GM12878 (cell line): ENCODE measurements at regions of chr6 and their contacts with region 1.

Region 1: DNA sequence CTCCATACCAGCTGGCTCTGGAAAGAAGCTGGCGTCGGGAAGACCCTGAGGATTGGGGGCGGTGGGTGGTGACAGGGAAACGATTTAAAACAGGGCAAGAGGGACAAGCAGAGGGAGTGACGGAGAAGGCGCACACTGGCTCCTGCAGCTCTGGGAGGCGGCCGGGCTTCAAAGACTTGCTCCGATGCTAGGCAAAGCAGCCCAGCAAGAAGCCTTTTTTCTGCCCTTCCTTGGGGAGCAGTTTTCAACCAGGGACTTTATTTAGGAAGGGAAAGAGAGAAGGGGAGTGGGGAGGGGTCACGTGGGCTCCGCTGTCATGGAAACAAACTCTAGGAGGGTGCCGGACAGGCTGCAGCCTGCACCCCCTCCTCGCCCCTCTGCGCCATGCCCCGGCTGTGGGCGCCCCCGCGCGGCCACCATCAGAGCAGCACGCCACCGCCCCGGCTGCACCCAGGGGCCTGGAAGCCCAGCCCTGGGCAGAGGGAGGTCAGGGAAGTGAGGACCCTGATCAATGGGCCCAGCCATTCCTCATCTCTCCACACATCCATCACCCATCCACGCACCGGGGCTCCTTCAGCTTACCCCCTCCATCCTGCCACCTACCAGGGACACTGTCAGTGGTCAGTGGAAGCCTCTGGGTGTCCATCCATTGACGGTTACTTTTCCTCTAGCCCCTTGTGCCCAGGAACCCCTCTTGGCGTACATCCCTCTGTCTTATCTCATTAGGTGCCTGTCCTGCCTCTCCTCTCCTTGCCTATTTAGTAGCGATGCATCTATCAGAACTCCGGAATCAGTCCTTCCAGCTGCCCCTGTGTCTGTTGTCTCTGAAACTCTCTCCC is 66.6 kb upstream of the CCDC167 start:
- DNase-seq: no peak
- ATAC-seq: peak; percentile 73
- H3K4me3 ChIP-seq: peak overlapping the region; percentile 61
- H3K27ac ChIP-seq: peak overlapping the region; percentile 91
- H3K4me1 ChIP-seq: peaks cover 52% of the 10 kb centered on the region
- H3K27me3 ChIP-seq: no peaks in the 10 kb centered on the region
- CTCF ChIP-seq: peak; percentile 86 to 97 (median 89)
- EP300 ChIP-seq: no peak
- POLR2A ChIP-seq: no peak
- RAD21 ChIP-seq: peak; percentile 93

Region 2: GRCh38 chr6:37222125-37222967 is 344.0 kb before region 1 on chr6:
- CTCF ChIA-PET with region 1: no interaction called
- POLR2A ChIA-PET with region 1: no interaction called
- RAD21 ChIA-PET with region 1: no interaction called
- SMC1A ChIA-PET with region 1: no interaction called
- in situ Hi-C with region 1: no loop called
- intact Hi-C with region 1: no loop called
- DNase-seq: peak; percentile 45
- ATAC-seq: peak; percentile 98
- H3K4me3 ChIP-seq: peak overlapping the region; percentile 71
- H3K27ac ChIP-seq: no peak overlapping the region
- H3K4me1 ChIP-seq: peaks cover 11% of the 10 kb centered on the region
- H3K27me3 ChIP-seq: no peaks in the 10 kb centered on the region
- CTCF ChIP-seq: no peak
- EP300 ChIP-seq: no peak
- POLR2A ChIP-seq: no peak; the same call in 1 of the 2 replicates
- RAD21 ChIP-seq: no peak

Region 3: DNA sequence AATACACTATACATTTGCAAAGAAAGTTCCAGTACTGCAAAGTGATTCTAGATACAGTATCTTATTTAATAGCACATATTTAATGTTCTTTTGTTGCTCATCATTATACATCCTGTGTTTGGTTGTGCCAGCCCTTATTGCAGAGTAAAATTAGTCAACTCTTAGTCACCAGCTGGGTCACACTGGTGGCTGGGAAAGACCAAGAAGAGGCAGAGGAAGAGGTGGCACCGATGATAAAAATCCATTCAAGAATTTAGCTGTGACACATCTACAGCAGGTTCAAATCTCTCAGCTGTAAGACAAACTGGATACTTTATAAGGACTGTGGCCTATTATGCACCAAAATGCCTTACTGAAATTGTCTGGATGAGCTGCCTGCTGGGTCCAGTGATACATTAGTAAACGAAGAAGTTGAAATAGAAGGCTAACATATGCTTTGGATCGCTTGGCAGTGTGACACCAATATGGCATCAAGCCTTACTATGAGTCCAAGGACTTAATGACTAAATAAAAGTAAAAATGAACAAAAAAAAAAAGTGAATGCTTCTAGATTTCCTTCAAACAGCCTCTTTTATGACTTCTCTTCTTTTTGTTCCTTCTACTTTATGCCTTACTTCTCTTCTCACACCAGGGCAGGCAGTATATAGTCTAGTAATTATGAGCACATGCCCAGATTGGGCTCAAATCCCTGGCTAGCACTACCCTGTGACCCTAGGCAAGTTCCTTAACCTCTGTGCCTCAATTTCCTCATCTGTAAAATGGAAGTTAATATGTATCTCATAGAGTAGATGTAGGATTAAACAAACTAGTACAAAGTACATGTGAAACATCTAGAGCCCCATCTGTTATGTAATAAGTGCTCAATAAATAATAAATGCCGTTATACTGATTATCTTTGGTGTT is 241.9 kb before region 1 on chr6:
- CTCF ChIA-PET with region 1: interaction called, 10 read pairs
- POLR2A ChIA-PET with region 1: no interaction called
- RAD21 ChIA-PET with region 1: interaction called, 10 read pairs
- SMC1A ChIA-PET with region 1: interaction called, 3 read pairs
- in situ Hi-C with region 1: no loop called
- intact Hi-C with region 1: loop called (anchors 10 kb)
- DNase-seq: no peak
- ATAC-seq: no peak
- H3K4me3 ChIP-seq: no peak overlapping the region
- H3K27ac ChIP-seq: no peak overlapping the region
- H3K4me1 ChIP-seq: no peaks in the 10 kb centered on the region
- H3K27me3 ChIP-seq: no peaks in the 10 kb centered on the region
- CTCF ChIP-seq: no peak
- EP300 ChIP-seq: no peak
- POLR2A ChIP-seq: no peak
- RAD21 ChIP-seq: no peak

Region 4: DNA sequence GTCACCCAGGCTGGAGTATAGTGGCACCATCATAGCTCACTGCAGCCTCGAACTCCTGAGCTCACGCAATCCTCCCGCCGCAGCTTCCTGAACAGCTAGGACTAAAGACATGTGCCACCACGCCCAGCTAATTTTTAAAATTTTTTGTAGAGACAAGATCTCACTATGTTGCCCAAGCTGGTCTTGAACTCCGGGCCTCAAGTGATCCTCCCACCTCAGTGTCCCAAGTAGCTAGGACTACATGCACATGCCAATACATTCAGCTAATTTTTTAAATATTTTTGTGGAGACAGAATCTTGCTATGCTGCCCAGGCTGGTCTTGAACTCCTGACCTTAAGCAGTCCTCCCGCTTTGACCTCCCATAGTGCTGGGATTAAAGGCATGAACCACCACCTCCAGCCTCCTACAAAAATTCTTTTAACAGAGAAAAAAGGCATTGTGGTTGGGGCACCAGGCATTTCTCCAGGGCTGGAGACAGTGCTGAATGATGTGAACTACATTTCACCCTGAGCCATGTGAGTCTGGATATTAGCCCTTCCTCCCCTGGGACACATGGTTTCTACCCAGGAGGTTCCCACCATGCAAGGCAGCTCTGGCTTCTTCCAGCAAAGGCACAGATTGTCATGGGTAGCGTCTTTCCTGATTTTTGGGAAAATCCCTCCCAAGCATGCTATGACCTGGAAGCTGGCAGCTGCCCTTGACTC is 169.7 kb before region 1 on chr6:
- CTCF ChIA-PET with region 1: no interaction called
- POLR2A ChIA-PET with region 1: no interaction called
- RAD21 ChIA-PET with region 1: no interaction called
- SMC1A ChIA-PET with region 1: no interaction called
- in situ Hi-C with region 1: no loop called
- intact Hi-C with region 1: no loop called
- DNase-seq: no peak
- ATAC-seq: no peak
- H3K4me3 ChIP-seq: no peak overlapping the region
- H3K27ac ChIP-seq: no peak overlapping the region
- H3K4me1 ChIP-seq: no peaks in the 10 kb centered on the region
- H3K27me3 ChIP-seq: no peaks in the 10 kb centered on the region
- CTCF ChIP-seq: no peak
- EP300 ChIP-seq: no peak
- POLR2A ChIP-seq: no peak
- RAD21 ChIP-seq: no peak

Region 5: GRCh38 chr6:37432916-37433656 is 133.2 kb before region 1 on chr6 and contains the start of gene CMTR1:
- CTCF ChIA-PET with region 1: interaction called, 14 read pairs
- POLR2A ChIA-PET with region 1: interaction called, 3 read pairs
- RAD21 ChIA-PET with region 1: interaction called, 12 read pairs
- SMC1A ChIA-PET with region 1: interaction called, 5 read pairs
- in situ Hi-C with region 1: no loop called
- intact Hi-C with region 1: no loop called
- DNase-seq: peak; percentile 83
- ATAC-seq: peak; percentile 91
- H3K4me3 ChIP-seq: peak within 1 kb of the TSS; percentile 97
- H3K27ac ChIP-seq: peak within 1 kb of the TSS; percentile 94
- H3K4me1 ChIP-seq: peaks cover 5% of the 10 kb centered on the region
- H3K27me3 ChIP-seq: no peaks in the 10 kb centered on the region
- CTCF ChIP-seq: no peak
- EP300 ChIP-seq: peak in 1 of 2 experiments; percentile 42; a peak in 2 of 4 replicates
- POLR2A ChIP-seq: peak; percentile 90
- RAD21 ChIP-seq: no peak
- polyA plus RNA-seq, gene CMTR1: 2.7 to 3.5 TPM

Region 6: DNA sequence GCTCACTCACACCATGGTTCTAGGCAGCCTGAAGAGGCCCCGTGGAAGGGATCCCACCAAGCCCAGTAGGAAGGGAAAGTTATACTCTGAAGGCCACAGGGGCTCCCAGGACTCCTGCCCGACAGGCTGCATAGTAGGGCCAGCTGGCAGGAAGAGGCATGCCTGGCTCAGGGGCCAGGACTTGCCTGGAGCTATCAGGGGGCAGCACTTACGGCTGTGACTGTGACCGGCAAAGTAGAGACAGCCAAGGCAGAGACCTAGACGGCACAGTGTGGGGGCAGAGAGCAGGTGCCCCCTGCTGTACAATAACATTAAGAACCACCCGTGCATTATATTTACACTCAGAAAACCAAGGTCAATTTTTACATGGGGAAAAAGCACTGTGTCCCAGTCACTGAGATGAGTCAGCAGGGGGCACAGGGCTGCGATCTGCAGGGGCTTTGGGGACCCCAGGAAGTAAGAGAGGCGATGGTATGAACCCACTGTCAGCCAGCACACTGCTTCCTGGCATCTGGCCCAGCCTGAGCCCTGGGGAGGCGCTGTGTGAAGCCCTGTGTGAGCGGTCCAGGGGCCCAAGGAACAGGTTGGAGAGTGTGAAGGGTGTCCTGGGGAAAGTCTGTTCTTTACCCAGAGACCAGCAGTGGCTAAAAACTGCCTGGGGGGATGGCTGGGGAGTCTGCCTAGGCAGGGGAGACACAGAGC is 76.5 kb before region 1 on chr6:
- CTCF ChIA-PET with region 1: interaction called, 97 read pairs
- POLR2A ChIA-PET with region 1: interaction called, 53 read pairs
- RAD21 ChIA-PET with region 1: interaction called, 32 read pairs
- SMC1A ChIA-PET with region 1: interaction called, 92 read pairs
- in situ Hi-C with region 1: no loop called
- intact Hi-C with region 1: no loop called
- DNase-seq: no peak
- ATAC-seq: peak; percentile 54
- H3K4me3 ChIP-seq: no peak overlapping the region
- H3K27ac ChIP-seq: peak overlapping the region; percentile 69
- H3K4me1 ChIP-seq: peaks cover 58% of the 10 kb centered on the region
- H3K27me3 ChIP-seq: no peaks in the 10 kb centered on the region
- CTCF ChIP-seq: peak; percentile 11 to 35 (median 14); a peak in 4 of 6 replicates
- EP300 ChIP-seq: no peak
- POLR2A ChIP-seq: 0 out of 2 replicates have a peak, but pooled peaks have one; percentile 9
- RAD21 ChIP-seq: no peak

Region 7: GRCh38 chr6:37516076-37516919 is 50.0 kb before region 1 on chr6:
- CTCF ChIA-PET with region 1: interaction called, 25 read pairs
- POLR2A ChIA-PET with region 1: interaction called, 16 read pairs
- RAD21 ChIA-PET with region 1: interaction called, 14 read pairs
- SMC1A ChIA-PET with region 1: interaction called, 13 read pairs
- in situ Hi-C with region 1: no loop called
- intact Hi-C with region 1: no loop called
- DNase-seq: peak; percentile 78
- ATAC-seq: peak; percentile 94
- H3K4me3 ChIP-seq: 0 out of 2 replicates have a peak overlapping the region, but pooled peaks have one; percentile 10
- H3K27ac ChIP-seq: peak overlapping the region; percentile 65
- H3K4me1 ChIP-seq: peaks cover 33% of the 10 kb centered on the region
- H3K27me3 ChIP-seq: no peaks in the 10 kb centered on the region
- CTCF ChIP-seq: peak in 2 of 3 experiments; percentile 3 to 11; a peak in 1 of 6 replicates
- EP300 ChIP-seq: peak in 1 of 2 experiments; percentile 26; a peak in 1 of 4 replicates
- POLR2A ChIP-seq: peak; percentile 69
- RAD21 ChIP-seq: no peak

Region 8: GRCh38 chr6:37554480-37554819 is 11.9 kb before region 1 on chr6:
- CTCF ChIA-PET with region 1: interaction called, 235 read pairs
- POLR2A ChIA-PET with region 1: interaction called, 114 read pairs
- RAD21 ChIA-PET with region 1: interaction called, 174 read pairs
- SMC1A ChIA-PET with region 1: interaction called, 232 read pairs
- in situ Hi-C with region 1: no loop called
- intact Hi-C with region 1: loop called (anchors 1 kb)
- DNase-seq: no peak
- ATAC-seq: peak; percentile 8
- H3K4me3 ChIP-seq: peak overlapping the region; percentile 81
- H3K27ac ChIP-seq: peak overlapping the region; percentile 91
- H3K4me1 ChIP-seq: peaks cover 86% of the 10 kb centered on the region
- H3K27me3 ChIP-seq: no peaks in the 10 kb centered on the region
- CTCF ChIP-seq: no peak
- EP300 ChIP-seq: no peak
- POLR2A ChIP-seq: no peak
- RAD21 ChIP-seq: no peak

Region 9: GRCh38 chr6:37587866-37588734 is 21.8 kb after region 1 on chr6:
- CTCF ChIA-PET with region 1: no interaction called
- POLR2A ChIA-PET with region 1: no interaction called
- RAD21 ChIA-PET with region 1: no interaction called
- SMC1A ChIA-PET with region 1: no interaction called
- in situ Hi-C with region 1: no loop called
- intact Hi-C with region 1: no loop called
- DNase-seq: no peak
- ATAC-seq: no peak
- H3K4me3 ChIP-seq: no peak overlapping the region
- H3K27ac ChIP-seq: no peak overlapping the region
- H3K4me1 ChIP-seq: no peaks in the 10 kb centered on the region
- H3K27me3 ChIP-seq: no peaks in the 10 kb centered on the region; a peak in 2 of 4 replicates
- CTCF ChIP-seq: no peak
- EP300 ChIP-seq: no peak
- POLR2A ChIP-seq: no peak
- RAD21 ChIP-seq: no peak

Region 10: DNA sequence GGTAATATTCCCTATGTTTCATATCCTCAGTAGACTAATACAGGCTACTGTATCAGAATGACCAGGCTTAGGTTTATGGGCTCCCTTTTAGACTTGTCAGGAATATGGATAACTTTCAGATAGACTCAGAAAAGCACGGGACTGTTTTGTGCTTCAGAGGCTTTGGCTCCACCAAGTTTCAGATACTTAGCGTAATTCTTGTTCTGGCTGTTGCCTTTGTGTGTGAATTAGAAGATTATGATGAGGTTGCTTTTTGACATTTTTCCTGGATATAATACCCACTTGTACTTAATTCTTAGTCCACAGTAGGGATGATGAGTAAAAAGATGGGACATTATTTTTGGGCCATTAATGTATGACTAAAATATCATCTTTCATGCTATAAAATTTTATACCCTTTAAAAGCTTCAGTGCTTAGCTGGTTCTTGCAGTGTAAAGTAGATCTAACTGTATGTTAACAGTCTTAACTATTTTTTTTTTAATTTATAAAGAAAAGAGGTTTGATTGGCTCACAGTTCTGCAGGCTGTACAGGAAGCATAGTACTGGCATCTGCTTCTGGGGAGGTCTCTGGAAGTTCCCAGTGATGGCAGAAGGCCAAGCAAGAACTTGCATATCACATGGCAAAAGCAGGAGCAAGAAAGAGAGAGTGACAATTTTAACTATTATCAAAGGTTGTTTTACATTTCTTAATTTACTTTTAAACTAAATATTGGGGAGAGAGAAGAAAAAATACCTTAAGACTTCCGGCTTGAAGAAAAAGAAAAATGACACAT is 373.9 kb after region 1 on chr6:
- CTCF ChIA-PET with region 1: no interaction called
- POLR2A ChIA-PET with region 1: no interaction called
- RAD21 ChIA-PET with region 1: no interaction called
- SMC1A ChIA-PET with region 1: no interaction called
- in situ Hi-C with region 1: no loop called
- intact Hi-C with region 1: no loop called
- DNase-seq: no peak
- ATAC-seq: no peak
- H3K4me3 ChIP-seq: no peak overlapping the region
- H3K27ac ChIP-seq: no peak overlapping the region
- H3K4me1 ChIP-seq: peaks cover 24% of the 10 kb centered on the region
- H3K27me3 ChIP-seq: no peaks in the 10 kb centered on the region
- CTCF ChIP-seq: no peak
- EP300 ChIP-seq: no peak
- POLR2A ChIP-seq: no peak
- RAD21 ChIP-seq: no peak